ENCODE measurements at regions of chr10 and their contacts with region 1.

Region 1: GRCh38 chr10:26931223-26931622 is 70.5 kb upstream of the ABI1 start:
- DNase-seq: no peak
- ATAC-seq: no peak
- H3K4me3 ChIP-seq: no peak overlapping the region
- H3K27ac ChIP-seq: no peak overlapping the region
- H3K4me1 ChIP-seq: no peaks in the 10 kb centered on the region
- H3K27me3 ChIP-seq: no peaks in the 10 kb centered on the region
- CTCF ChIP-seq: no peak
- POLR2A ChIP-seq: no peak
- RAD21 ChIP-seq: no peak

Region 2: GRCh38 chr10:26911811-26912461 is 19.3 kb before region 1 on chr10:
- CTCF ChIA-PET with region 1: no interaction called
- POLR2A ChIA-PET with region 1: no interaction called
- RAD21 ChIA-PET with region 1: no interaction called
- intact Hi-C with region 1: loop called (anchors 1 kb)
- DNase-seq: no peak
- ATAC-seq: no peak
- H3K4me3 ChIP-seq: no peak overlapping the region
- H3K27ac ChIP-seq: no peak overlapping the region
- H3K4me1 ChIP-seq: no peaks in the 10 kb centered on the region
- H3K27me3 ChIP-seq: no peaks in the 10 kb centered on the region
- CTCF ChIP-seq: no peak
- POLR2A ChIP-seq: no peak
- RAD21 ChIP-seq: no peak

Region 3: DNA sequence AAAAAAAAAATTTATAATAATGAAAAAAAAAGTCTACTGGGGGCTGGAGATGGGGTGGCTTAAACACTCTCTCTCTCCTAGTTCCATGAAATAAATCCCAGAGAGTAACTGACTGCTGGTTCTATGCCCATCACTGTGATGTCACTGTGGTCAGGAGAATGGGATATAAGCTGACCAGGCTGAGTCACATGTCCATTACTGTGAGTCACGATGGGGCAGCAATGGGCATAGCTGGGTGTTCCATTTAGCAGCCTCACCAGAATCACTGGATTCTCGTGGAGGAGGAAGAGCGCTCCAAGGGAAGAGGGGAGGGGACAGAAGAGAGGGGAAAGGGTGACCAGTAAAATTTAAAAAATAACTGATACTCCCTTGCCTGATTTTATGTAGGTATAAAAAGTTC is 261.1 kb after region 1 on chr10:
- CTCF ChIA-PET with region 1: no interaction called
- POLR2A ChIA-PET with region 1: no interaction called
- RAD21 ChIA-PET with region 1: no interaction called
- intact Hi-C with region 1: no loop called
- DNase-seq: peak; percentile 56
- ATAC-seq: peak; percentile 79
- H3K4me3 ChIP-seq: no peak overlapping the region
- H3K27ac ChIP-seq: no peak overlapping the region
- H3K4me1 ChIP-seq: peaks cover 5 to 11% of the 10 kb centered on the region in 2 experiments
- H3K27me3 ChIP-seq: no peaks in the 10 kb centered on the region
- CTCF ChIP-seq: no peak
- POLR2A ChIP-seq: no peak
- RAD21 ChIP-seq: no peak

Measured in HCT116 (cell line).